Sigmoid colon (tissue), 7 donors: ENCODE measurements at regions of chr16 and their contacts with region 1.

Region 1: DNA sequence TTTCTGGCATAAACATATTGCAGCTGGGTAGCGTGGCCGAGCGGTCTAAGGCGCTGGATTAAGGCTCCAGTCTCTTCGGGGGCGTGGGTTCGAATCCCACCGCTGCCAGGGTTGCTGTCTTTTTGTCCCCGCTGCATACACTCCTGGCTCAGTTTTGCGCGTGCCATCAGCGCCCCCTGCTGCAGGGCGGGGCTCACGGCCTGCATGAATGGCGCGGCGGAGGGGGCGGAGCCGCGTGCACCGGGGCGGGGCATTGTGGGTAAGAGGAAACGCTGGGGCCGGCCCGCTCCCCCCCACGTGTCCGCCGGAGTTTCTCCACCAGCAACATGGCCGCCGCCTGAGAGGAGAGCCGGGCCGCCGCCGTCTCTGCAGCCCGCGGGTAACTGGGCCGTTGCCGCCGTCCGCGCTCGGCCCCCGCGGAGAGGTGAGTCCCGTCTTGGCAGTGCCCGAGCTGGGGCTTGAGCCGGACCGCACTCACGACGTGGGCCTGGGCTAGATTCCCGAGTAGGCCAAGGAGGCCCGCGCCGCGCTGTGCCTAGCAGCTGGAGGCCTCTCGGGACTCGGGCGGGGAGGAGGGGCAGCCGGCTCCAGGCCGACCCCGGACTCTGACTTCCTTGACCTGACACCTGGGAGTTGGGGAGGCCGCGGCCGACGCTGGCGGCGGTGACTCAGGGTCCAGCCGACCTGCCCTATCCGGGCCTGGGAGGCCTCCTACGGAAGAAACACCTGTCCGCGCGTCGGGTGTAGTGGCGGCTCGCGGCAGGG is at the start of gene POLR3E:
- DNase-seq: peak; percentile 99
- H3K4me3 ChIP-seq: peak within 1 kb of the TSS; percentile 65 to 98 (median 83)
- H3K27ac ChIP-seq: peak within 1 kb of the TSS; percentile 93 to 96 (median 95)
- H3K4me1 ChIP-seq: peaks cover 0 to 39% (median 26%) of the 10 kb centered on the region in 4 donors
- H3K27me3 ChIP-seq: no peaks in the 10 kb centered on the region
- CTCF ChIP-seq: peak; percentile 87 to 97 (median 91)
- EP300 ChIP-seq: peak in 1 of 4 donors; percentile 44
- POLR2A ChIP-seq: no peak
- total RNA-seq, gene POLR3E: 39.3 to 68.7 (median 49.4) TPM

Region 2: DNA sequence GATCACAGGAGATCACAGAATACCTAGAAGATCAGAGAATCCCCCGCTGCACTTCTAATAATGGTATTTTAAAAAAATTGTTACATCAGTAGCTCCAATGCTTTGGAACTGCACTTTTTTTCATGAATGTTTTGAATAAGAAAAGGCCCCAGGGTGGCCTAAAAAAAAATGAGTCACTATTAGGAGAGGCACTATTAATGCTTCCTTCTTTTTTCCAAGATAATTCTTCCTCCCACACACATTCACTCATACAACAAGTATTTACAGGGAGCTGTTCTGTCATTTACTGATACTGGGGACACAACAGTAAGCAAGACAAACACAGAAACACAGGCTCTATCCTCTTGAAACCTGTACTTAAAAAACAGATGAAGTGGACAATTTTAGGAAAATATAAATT is 295.7 kb before region 1 on chr16:
- intact Hi-C with region 1: loop called (anchors 2 kb)
- DNase-seq: no peak
- H3K4me3 ChIP-seq: no peak overlapping the region
- H3K27ac ChIP-seq: no peak overlapping the region
- H3K4me1 ChIP-seq: peaks cover 0 to 10% (median 9%) of the 10 kb centered on the region in 4 donors
- H3K27me3 ChIP-seq: no peaks in the 10 kb centered on the region
- CTCF ChIP-seq: no peak
- EP300 ChIP-seq: no peak
- POLR2A ChIP-seq: no peak

Region 3: GRCh38 chr16:22190776-22191531 is 106.3 kb before region 1 on chr16:
- intact Hi-C with region 1: loop called (anchors 1 kb)
- DNase-seq: peak; percentile 100
- H3K4me3 ChIP-seq: peak overlapping the region; percentile 35 to 87 (median 66)
- H3K27ac ChIP-seq: peak overlapping the region; percentile 90 to 96 (median 93)
- H3K4me1 ChIP-seq: peaks cover 0 to 36% (median 30%) of the 10 kb centered on the region in 4 donors
- H3K27me3 ChIP-seq: no peaks in the 10 kb centered on the region
- CTCF ChIP-seq: no peak
- EP300 ChIP-seq: no peak
- POLR2A ChIP-seq: peak; percentile 90 to 92

Region 4: GRCh38 chr16:22240023-22240710 is 57.1 kb before region 1 on chr16:
- intact Hi-C with region 1: loop called (anchors 5 kb)
- DNase-seq: no peak
- H3K4me3 ChIP-seq: no peak overlapping the region
- H3K27ac ChIP-seq: peak overlapping the region; percentile 67 to 77 (median 75)
- H3K4me1 ChIP-seq: peaks cover 0 to 35% (median 28%) of the 10 kb centered on the region in 4 donors
- H3K27me3 ChIP-seq: no peaks in the 10 kb centered on the region
- CTCF ChIP-seq: no peak
- EP300 ChIP-seq: peak in 1 of 4 donors; percentile 70
- POLR2A ChIP-seq: no peak